ENCODE measurements at regions of chr11 and their contacts with region 1.

Region 1: GRCh38 chr11:25159341-25159740 is 662.5 kb downstream of the LUZP2 start:
- DNase-seq: no peak
- ATAC-seq: no peak
- H3K4me3 ChIP-seq: no peak overlapping the region
- H3K27ac ChIP-seq: no peak overlapping the region
- H3K4me1 ChIP-seq: no peaks in the 10 kb centered on the region
- H3K27me3 ChIP-seq: no peaks in the 10 kb centered on the region
- CTCF ChIP-seq: no peak

Region 2: DNA sequence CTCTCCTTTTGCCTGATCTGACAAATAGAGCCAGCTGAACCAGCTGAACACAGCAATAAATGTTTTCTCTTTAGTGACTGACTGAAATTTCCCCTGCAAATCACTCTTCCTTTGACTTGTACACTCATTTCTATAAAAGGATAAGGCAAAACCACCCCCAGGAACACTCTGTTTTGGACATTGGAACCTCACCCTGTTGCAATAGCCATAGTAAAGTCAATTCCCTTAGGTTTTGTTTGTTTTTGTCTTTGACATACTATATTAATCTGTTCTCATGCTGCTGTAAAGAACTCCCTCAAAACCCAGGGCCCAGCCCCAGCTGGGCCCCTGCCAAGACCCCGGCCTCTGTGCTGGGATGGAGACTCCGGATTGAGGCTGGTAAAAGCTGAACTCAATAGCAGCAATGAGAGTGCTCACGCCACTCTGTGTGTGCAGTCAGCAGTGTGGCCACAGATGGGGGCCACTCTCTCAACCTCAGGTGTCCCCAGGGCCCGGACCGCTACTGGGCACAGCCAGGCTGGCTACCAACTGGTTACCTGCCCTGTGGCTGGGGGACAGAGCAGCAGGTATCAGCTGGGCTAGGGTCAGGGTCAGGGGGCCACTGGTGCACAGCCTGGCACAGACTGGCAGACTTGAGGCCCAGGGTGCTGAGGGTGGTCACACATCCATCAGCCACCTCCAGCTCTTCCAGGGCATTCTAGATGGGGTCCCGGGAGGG is 65.1 kb before region 1 on chr11:
- intact Hi-C with region 1: loop called in 1 of 2 experiments (anchors 10 kb)
- DNase-seq: no peak
- ATAC-seq: no peak
- H3K4me3 ChIP-seq: no peak overlapping the region
- H3K27ac ChIP-seq: no peak overlapping the region
- H3K4me1 ChIP-seq: no peaks in the 10 kb centered on the region
- H3K27me3 ChIP-seq: no peaks in the 10 kb centered on the region
- CTCF ChIP-seq: no peak

Region 3: GRCh38 chr11:25211635-25212251 is 52.4 kb after region 1 on chr11:
- intact Hi-C with region 1: no loop called
- DNase-seq: no peak
- ATAC-seq: no peak
- H3K4me3 ChIP-seq: no peak overlapping the region
- H3K27ac ChIP-seq: no peak overlapping the region
- H3K4me1 ChIP-seq: no peaks in the 10 kb centered on the region
- H3K27me3 ChIP-seq: no peaks in the 10 kb centered on the region
- CTCF ChIP-seq: no peak